Breast epithelium (tissue), 4 donors: ENCODE measurements at regions of chr11 and their contacts with region 1.

Region 1: GRCh38 chr11:131089697-131090245 is 173.5 kb upstream of the SNX19 start:
- DNase-seq: no peak
- H3K4me3 ChIP-seq: no peak overlapping the region
- H3K27ac ChIP-seq: no peak overlapping the region
- H3K4me1 ChIP-seq: no peaks in the 10 kb centered on the region
- H3K27me3 ChIP-seq: no peaks in the 10 kb centered on the region
- CTCF ChIP-seq: no peak
- POLR2A ChIP-seq: no peak

Region 2: GRCh38 chr11:129447654-129448239 is 1642.0 kb before region 1 on chr11:
- intact Hi-C with region 1: loop called (anchors 5 kb)
- DNase-seq: no peak
- H3K4me3 ChIP-seq: no peak overlapping the region
- H3K27ac ChIP-seq: no peak overlapping the region
- H3K4me1 ChIP-seq: no peaks in the 10 kb centered on the region
- H3K27me3 ChIP-seq: no peaks in the 10 kb centered on the region
- CTCF ChIP-seq: no peak
- POLR2A ChIP-seq: no peak

Region 3: GRCh38 chr11:131042041-131042390 is 47.8 kb before region 1 on chr11:
- intact Hi-C with region 1: no loop called
- DNase-seq: no peak
- H3K4me3 ChIP-seq: no peak overlapping the region
- H3K27ac ChIP-seq: no peak overlapping the region
- H3K4me1 ChIP-seq: no peaks in the 10 kb centered on the region
- H3K27me3 ChIP-seq: peaks cover 0 to 13% of the 10 kb centered on the region in 2 donors
- CTCF ChIP-seq: no peak
- POLR2A ChIP-seq: no peak

Region 4: DNA sequence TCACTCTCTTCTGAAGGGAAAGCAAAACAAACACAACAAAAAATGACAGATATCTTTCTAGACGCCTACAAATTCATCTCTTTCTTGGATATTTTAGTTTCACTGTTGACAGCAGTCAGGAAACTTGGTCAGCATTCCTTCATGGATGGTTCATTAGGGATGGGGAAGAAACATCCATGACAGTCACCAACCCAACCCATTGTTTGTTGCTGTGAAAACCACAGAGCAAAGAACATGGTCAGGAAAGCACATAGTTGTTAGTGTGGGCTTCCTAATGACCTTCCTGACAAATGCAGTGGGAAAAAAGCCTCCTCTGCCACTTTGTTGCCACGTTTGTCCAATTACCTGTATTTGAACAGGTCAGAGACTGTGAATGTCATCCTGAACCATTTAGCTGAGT is 33.7 kb before region 1 on chr11:
- intact Hi-C with region 1: no loop called
- DNase-seq: no peak
- H3K4me3 ChIP-seq: no peak overlapping the region
- H3K27ac ChIP-seq: no peak overlapping the region
- H3K4me1 ChIP-seq: no peaks in the 10 kb centered on the region
- H3K27me3 ChIP-seq: peaks cover 0 to 2% of the 10 kb centered on the region in 2 donors
- CTCF ChIP-seq: no peak
- POLR2A ChIP-seq: no peak